ENCODE measurements at regions of chr18 and their contacts with region 1.

Region 1: DNA sequence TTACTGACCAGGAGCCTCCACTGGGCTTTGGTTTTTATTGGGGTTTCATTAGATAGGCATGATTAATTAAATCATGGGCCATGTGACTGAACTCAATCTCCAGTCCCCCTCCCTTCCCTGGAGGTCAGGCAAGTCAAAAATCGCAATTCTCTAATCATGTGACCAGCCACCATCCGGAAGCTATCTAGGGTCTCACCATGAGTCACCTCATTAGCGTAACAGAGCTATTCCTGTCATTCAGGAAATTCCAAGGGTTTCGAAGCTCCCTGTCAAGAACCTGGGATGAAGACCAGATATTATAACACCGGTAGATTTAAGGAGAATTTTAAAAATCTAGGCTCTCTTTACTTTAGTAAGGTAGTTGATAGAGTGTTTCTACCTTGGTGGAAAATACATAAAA is 180.3 kb upstream of the TCF4 start:
- DNase-seq: no peak
- ATAC-seq: no peak
- H3K4me3 ChIP-seq: no peak overlapping the region
- H3K27ac ChIP-seq: no peak overlapping the region
- H3K4me1 ChIP-seq: no peaks in the 10 kb centered on the region; a peak in 1 of 5 replicates
- H3K27me3 ChIP-seq: no peaks in the 10 kb centered on the region
- CTCF ChIP-seq: no peak
- EP300 ChIP-seq: no peak
- POLR2A ChIP-seq: no peak
- RAD21 ChIP-seq: no peak

Region 2: DNA sequence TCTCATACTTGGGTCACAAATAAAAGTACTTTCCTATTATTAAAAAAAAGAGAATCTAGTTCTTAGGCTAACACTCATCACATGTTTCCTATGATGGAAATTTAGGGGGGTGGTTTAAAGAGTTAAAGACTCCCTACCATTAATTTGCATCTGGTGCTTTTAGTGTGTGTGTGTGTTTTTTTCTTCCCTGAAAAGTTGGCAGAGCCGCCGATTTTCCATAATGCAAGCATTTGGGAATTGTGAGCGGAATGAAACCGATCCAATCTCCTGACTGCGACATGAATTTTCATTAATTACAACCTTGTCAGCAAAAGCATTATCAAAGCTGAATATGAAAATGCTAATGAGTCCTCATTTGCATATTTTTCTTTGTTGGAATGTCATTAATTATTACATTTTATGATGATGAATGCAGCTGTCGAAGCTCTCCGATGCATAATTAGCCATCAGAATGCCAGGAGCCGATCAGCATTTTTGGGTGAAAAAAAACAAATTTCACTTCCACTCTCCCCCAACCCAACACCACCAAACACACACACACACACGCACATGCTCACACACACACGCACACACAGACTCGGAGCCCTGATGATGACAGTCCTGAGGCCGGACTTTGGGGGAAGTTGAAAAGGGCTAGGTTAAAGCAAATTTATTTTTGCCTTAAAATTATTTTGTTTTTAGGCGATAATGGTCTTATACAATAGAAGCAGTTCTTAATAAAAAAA is 345.6 kb before region 1 on chr18:
- CTCF ChIA-PET with region 1: no interaction called
- POLR2A ChIA-PET with region 1: no interaction called
- in situ Hi-C with region 1: loop called (anchors 10 kb)
- intact Hi-C with region 1: loop called (anchors 5 kb)
- DNase-seq: no peak
- ATAC-seq: no peak
- H3K4me3 ChIP-seq: no peak overlapping the region
- H3K27ac ChIP-seq: no peak overlapping the region
- H3K4me1 ChIP-seq: no peaks in the 10 kb centered on the region; a peak in 1 of 5 replicates
- H3K27me3 ChIP-seq: no peaks in the 10 kb centered on the region
- CTCF ChIP-seq: no peak
- EP300 ChIP-seq: no peak
- POLR2A ChIP-seq: no peak
- RAD21 ChIP-seq: no peak